ENCODE measurements at regions of chr6 and their contacts with region 1.

Region 1: DNA sequence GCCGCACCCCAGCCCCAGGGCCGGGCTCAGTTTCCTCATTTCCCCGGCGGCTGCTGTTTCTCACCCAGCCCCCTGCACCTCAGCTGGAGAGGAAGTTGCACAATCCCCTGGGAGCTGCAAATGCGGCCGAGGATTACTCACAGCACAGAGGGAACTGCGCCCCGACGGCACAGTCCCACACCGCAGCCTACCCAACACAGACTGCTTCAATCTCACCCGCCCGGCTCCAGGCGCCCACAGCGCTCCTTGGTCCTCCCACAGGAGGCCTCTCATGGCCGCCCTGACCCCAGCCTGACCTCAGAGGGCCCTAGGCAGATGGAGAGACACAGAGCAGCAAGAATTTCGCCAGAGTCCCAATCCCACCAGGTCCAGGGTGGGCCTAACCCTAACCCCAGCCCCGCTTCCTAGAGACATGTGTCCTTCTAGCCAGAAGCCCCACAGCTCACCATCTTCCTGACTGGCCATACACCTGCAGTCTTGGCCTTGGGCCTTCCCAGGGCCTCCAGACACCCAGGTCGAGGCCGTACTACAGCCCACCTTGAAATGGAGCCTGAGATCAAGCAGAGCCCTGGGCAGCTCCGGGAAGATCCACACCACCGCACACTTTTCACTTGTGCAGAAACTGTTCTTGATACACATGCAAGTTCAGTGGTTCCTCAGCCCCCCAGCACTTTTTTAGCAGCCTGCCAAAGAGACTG is 11.7 kb downstream of the TFEB start:
- DNase-seq: peak; percentile 69 to 73
- H3K4me3 ChIP-seq: no peak overlapping the region
- H3K27ac ChIP-seq: peak overlapping the region; percentile 46
- H3K4me1 ChIP-seq: peaks cover 17% of the 10 kb centered on the region
- H3K27me3 ChIP-seq: no peaks in the 10 kb centered on the region
- CTCF ChIP-seq: no peak

Region 2: DNA sequence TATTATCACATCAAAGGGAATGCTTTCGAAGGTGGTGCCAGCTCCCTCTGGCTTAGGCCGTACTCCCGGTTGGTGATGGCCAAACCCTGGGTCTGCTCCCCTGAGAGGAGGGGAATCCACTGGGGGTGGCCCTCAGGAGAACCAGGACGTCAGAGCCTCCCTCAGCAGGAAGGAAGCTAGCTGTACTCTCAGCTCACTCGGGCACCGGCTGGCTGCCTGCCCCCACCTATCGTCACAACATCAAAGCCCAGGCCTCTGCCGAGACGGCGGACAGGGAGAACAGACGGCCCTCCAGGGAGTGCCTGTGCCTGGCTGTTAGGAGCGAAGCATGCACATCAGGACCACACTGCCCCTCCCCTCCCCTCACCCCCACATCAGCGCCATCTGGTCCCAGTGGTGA is 32.7 kb after region 1 on chr6:
- CTCF ChIA-PET with region 1: no interaction called
- POLR2A ChIA-PET with region 1: interaction called, 25 read pairs
- intact Hi-C with region 1: no loop called
- DNase-seq: no peak
- H3K4me3 ChIP-seq: no peak overlapping the region
- H3K27ac ChIP-seq: no peak overlapping the region
- H3K4me1 ChIP-seq: peaks cover 14% of the 10 kb centered on the region; the same call in 1 of the 2 replicates
- H3K27me3 ChIP-seq: no peaks in the 10 kb centered on the region
- CTCF ChIP-seq: no peak

Measured in PC-9 (cell line).